IMR-90 (cell line): ENCODE measurements at regions of chr3 and their contacts with region 1.

Region 1: GRCh38 chr3:81910244-81910852 is 148.9 kb upstream of the GBE1 start:
- DNase-seq: peak; percentile 21
- ATAC-seq: peak; percentile 54; the same call in 1 of the 2 replicates
- H3K4me3 ChIP-seq: no peak overlapping the region
- H3K27ac ChIP-seq: no peak overlapping the region
- H3K4me1 ChIP-seq: no peaks in the 10 kb centered on the region
- H3K27me3 ChIP-seq: no peaks in the 10 kb centered on the region
- CTCF ChIP-seq: peak; percentile 65
- POLR2A ChIP-seq: no peak
- RAD21 ChIP-seq: peak; percentile 46

Region 2: DNA sequence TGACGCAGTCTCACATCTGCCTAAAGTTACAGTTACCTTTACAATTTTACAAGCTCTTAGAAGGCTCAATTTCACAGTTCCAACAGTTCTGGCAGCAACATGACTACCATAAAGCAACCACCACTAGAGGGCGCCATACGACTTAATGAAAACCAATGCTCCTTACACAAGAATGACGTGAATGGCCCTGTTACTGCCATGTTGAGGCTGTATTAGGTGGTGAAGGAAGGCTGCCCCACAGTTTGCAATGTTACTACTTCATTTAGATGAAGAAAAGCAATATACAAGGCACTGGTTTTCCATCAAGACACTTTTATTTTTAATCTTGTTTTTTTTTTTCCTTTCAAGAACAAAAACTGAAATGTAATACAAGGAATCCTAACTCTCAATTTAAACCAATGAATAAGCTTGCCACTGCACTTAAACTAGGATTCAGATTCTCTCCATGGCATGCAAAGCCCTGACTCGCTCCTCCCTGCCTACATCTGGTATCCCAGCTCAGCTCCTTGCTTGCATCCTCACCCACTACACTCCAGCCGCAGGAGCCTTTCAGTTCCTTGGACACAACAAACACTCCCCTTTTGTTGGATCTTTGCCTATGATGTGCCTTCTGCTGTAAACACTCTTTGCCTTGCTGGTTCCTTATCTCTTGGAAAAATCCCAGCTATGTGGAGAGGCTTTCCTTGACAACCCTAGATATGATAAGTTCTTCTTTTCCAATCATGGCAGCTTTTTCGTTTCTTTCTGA is 419.6 kb before region 1 on chr3:
- CTCF ChIA-PET with region 1: no interaction called
- POLR2A ChIA-PET with region 1: no interaction called
- dilution Hi-C with region 1: no loop called
- in situ Hi-C with region 1: no loop called
- intact Hi-C with region 1: loop called (anchors 1 kb)
- DNase-seq: peak; percentile 89
- ATAC-seq: peak; percentile 85
- H3K4me3 ChIP-seq: no peak overlapping the region
- H3K27ac ChIP-seq: no peak overlapping the region
- H3K4me1 ChIP-seq: 0 out of 2 replicates have a peak, but pooled peaks cover 2% of the 10 kb centered on the region
- H3K27me3 ChIP-seq: no peaks in the 10 kb centered on the region
- CTCF ChIP-seq: peak; percentile 78
- POLR2A ChIP-seq: no peak
- RAD21 ChIP-seq: peak; percentile 62

Region 3: GRCh38 chr3:81581966-81582599 is 328.3 kb before region 1 on chr3:
- CTCF ChIA-PET with region 1: no interaction called
- POLR2A ChIA-PET with region 1: no interaction called
- dilution Hi-C with region 1: no loop called
- in situ Hi-C with region 1: no loop called
- intact Hi-C with region 1: loop called (anchors 10 kb)
- DNase-seq: peak; percentile 47
- ATAC-seq: peak; percentile 88
- H3K4me3 ChIP-seq: no peak overlapping the region
- H3K27ac ChIP-seq: no peak overlapping the region
- H3K4me1 ChIP-seq: no peaks in the 10 kb centered on the region
- H3K27me3 ChIP-seq: no peaks in the 10 kb centered on the region
- CTCF ChIP-seq: peak; percentile 62
- POLR2A ChIP-seq: no peak
- RAD21 ChIP-seq: peak; percentile 69

Region 4: DNA sequence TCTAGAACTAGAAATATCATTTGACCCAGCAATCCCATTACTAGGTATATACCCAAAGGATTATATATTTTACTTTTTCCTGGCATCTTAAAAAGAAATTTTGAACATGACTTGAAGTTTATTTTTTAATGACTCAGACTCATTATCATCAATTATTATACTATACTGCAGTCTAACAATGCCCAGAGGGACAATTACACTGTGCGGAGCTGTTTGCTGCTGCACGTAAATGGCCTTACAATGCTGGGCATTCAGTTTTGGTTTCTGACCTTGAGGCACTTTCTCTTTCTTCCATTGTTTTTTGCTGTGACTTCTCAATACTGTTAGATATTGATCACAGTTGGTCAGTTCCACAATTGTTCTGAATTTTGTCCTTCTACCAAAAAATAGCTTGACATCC is 277.7 kb before region 1 on chr3:
- CTCF ChIA-PET with region 1: no interaction called
- POLR2A ChIA-PET with region 1: no interaction called
- dilution Hi-C with region 1: no loop called
- in situ Hi-C with region 1: no loop called
- intact Hi-C with region 1: no loop called
- DNase-seq: no peak
- ATAC-seq: no peak
- H3K4me3 ChIP-seq: no peak overlapping the region
- H3K27ac ChIP-seq: no peak overlapping the region
- H3K4me1 ChIP-seq: no peaks in the 10 kb centered on the region
- H3K27me3 ChIP-seq: no peaks in the 10 kb centered on the region
- CTCF ChIP-seq: no peak
- POLR2A ChIP-seq: no peak
- RAD21 ChIP-seq: no peak

Region 5: GRCh38 chr3:81666493-81667121 is 243.7 kb before region 1 on chr3:
- CTCF ChIA-PET with region 1: interaction called, 3 read pairs
- POLR2A ChIA-PET with region 1: no interaction called
- dilution Hi-C with region 1: no loop called
- in situ Hi-C with region 1: no loop called
- intact Hi-C with region 1: loop called (anchors 2 kb)
- DNase-seq: peak; percentile 41
- ATAC-seq: no peak; the same call in 1 of the 2 replicates
- H3K4me3 ChIP-seq: no peak overlapping the region
- H3K27ac ChIP-seq: no peak overlapping the region
- H3K4me1 ChIP-seq: no peaks in the 10 kb centered on the region; the same call in 1 of the 2 replicates
- H3K27me3 ChIP-seq: no peaks in the 10 kb centered on the region
- CTCF ChIP-seq: peak; percentile 85
- POLR2A ChIP-seq: no peak
- RAD21 ChIP-seq: peak; percentile 89